Activated CD4-positive, alpha-beta memory T cell treated with anti-CD3 and anti-CD28 coated beads for 36 hours (primary cell): ENCODE measurements at regions of chr17 and their contacts with region 1.

Region 1: GRCh38 chr17:17859909-17860765 is 23.4 kb upstream of the SREBF1 start:
- DNase-seq: peak; percentile 79
- H3K4me3 Mint-ChIP-seq: no peak overlapping the region
- H3K27ac Mint-ChIP-seq: no peak overlapping the region
- H3K4me1 Mint-ChIP-seq: peaks cover 27% of the 10 kb centered on the region
- H3K27me3 Mint-ChIP-seq: no peaks in the 10 kb centered on the region

Region 2: GRCh38 chr17:17729620-17730249 is 130.4 kb before region 1 on chr17:
- CTCF ChIA-PET with region 1: interaction called, 6 read pairs
- POLR2A ChIA-PET with region 1: no interaction called
- intact Hi-C with region 1: loop called (anchors 5 kb)
- DNase-seq: peak; percentile 69
- H3K4me3 Mint-ChIP-seq: no peak overlapping the region
- H3K27ac Mint-ChIP-seq: no peak overlapping the region
- H3K4me1 Mint-ChIP-seq: peaks cover 4% of the 10 kb centered on the region
- H3K27me3 Mint-ChIP-seq: no peaks in the 10 kb centered on the region

Region 3: GRCh38 chr17:17812211-17813057 is 47.7 kb before region 1 on chr17:
- CTCF ChIA-PET with region 1: interaction called, 173 read pairs
- POLR2A ChIA-PET with region 1: no interaction called
- intact Hi-C with region 1: loop called (anchors 1 kb)
- DNase-seq: peak; percentile 73
- H3K4me3 Mint-ChIP-seq: no peak overlapping the region
- H3K27ac Mint-ChIP-seq: peak overlapping the region; percentile 38
- H3K4me1 Mint-ChIP-seq: peaks cover 4% of the 10 kb centered on the region
- H3K27me3 Mint-ChIP-seq: no peaks in the 10 kb centered on the region

Region 4: GRCh38 chr17:17836250-17836817 is 23.8 kb before region 1 on chr17:
- CTCF ChIA-PET with region 1: interaction called, 7 read pairs
- POLR2A ChIA-PET with region 1: interaction called, 99 read pairs
- intact Hi-C with region 1: no loop called
- DNase-seq: peak; percentile 99
- H3K4me3 Mint-ChIP-seq: peak overlapping the region; percentile 89
- H3K27ac Mint-ChIP-seq: peak overlapping the region; percentile 96
- H3K4me1 Mint-ChIP-seq: peaks cover 68% of the 10 kb centered on the region
- H3K27me3 Mint-ChIP-seq: no peaks in the 10 kb centered on the region

Region 5: DNA sequence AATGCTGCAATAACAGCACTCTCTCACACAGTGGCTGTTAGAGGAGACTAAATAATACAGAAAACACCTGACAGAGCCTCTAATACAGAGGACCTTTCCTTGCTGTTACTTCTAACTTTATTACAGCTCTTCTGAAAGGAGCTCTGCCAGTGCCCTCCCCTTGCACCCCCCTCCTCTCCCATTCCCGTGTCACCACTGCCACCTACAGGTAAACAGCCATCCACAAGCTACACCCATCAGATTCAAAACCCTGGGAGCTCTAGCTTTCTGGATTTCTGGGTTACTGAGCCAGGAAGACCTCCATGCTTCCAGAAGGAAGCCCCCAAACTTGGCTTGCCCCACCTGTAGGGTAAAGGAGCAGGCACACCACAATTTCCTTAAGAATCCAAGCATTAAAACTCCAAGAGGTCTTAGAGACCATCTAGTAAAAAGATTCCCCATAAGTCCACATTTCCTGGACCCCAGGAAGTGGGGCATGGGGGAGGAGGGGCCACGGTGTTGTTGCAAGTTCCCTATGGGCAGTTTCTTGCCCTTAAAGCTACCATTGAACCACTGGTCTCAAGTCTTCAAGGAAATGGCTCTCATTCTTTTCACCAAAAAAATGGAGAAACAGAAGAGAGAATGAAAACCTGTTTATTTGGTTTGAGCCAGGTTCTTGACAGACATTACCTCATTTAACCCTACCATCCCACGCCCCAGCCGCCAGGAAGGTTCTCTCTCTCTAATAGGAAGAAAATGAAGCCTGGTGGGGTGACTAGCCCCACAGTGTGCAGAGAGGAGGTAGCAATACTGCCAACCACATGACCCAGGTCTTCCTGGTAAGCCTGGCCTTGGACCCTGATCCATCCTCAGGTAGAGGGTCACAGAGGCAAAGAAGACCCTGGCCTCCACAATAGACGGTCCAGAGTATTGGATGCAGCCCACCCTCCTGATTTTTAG is 59.3 kb after region 1 on chr17:
- CTCF ChIA-PET with region 1: interaction called, 11 read pairs
- POLR2A ChIA-PET with region 1: no interaction called
- intact Hi-C with region 1: no loop called
- DNase-seq: peak; percentile 78
- H3K4me3 Mint-ChIP-seq: no peak overlapping the region
- H3K27ac Mint-ChIP-seq: no peak overlapping the region
- H3K4me1 Mint-ChIP-seq: peaks cover 6% of the 10 kb centered on the region
- H3K27me3 Mint-ChIP-seq: no peaks in the 10 kb centered on the region